ENCODE measurements at regions of chr10 and their contacts with region 1.

Region 1: DNA sequence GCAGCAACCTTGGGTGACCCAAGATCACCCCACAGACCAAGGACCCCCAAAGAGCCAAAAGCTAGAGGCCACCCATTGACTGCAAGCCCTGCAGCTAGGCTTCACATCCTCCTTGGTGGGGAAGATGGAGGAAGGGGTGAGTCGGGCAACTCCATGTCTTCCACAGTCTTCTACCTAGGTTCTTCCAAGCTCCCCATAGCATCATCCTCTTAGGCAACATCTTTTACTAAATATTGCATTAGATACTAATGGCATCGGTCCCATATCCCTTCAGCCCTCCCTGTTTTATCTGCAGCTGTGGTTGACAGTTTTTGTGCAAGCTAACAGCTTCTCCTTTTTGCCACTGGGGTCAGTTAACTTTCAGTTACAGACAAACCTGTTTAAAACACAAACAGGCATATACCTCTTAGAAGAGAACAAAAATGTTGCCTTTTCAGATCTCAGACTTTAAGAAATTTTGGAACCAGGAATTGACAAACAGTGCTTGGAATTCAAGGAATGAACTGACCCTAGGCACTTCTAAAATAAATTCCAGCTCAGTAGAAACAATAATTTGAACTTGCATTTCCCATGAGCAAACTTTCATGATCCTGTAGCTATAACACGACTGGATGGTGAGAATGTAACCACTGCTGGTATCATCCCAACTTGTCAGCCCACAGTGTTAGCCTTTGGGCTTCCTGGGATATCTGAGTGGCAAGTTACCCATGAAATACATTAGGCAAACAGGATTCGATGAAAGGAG is 33.9 kb upstream of the MSMB start:
- DNase-seq: no peak
- H3K4me3 ChIP-seq: no peak overlapping the region
- H3K4me3 Mint-ChIP-seq: peak overlapping the region in 1 of 8 donors; percentile 17
- H3K27ac ChIP-seq: no peak overlapping the region
- H3K27ac Mint-ChIP-seq: peak overlapping the region in 6 of 7 donors; percentile 42 to 83 (median 66)
- H3K4me1 ChIP-seq: peaks cover 18% of the 10 kb centered on the region
- H3K4me1 Mint-ChIP-seq: peaks cover 18 to 57% (median 34%) of the 10 kb centered on the region in 4 donors
- H3K27me3 ChIP-seq: no peaks in the 10 kb centered on the region
- H3K27me3 Mint-ChIP-seq: no peaks in the 10 kb centered on the region

Region 2: DNA sequence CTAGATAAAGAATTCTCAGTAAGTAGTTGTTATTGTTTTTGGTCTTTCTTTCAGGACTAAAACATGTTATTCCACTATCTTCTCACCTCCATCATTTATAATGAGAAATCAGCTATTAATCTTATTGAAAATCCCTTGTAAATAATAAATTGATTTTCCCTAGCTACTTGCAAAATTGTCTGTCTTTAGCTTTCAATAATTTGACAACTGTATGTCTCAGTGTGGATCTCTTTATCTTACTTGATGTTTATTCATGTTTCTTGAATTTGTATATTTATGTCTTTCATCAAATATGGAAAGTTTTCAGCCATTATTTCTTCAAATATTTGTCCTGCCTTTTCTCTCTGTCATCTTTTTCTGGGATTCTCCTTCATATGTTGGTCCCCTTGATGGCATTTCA is 89.7 kb after region 1 on chr10:
- CTCF ChIA-PET with region 1: no interaction called
- POLR2A ChIA-PET with region 1: no interaction called
- intact Hi-C with region 1: loop called (anchors 10 kb)
- DNase-seq: no peak
- H3K4me3 ChIP-seq: no peak overlapping the region
- H3K4me3 Mint-ChIP-seq: no peak overlapping the region
- H3K27ac ChIP-seq: no peak overlapping the region
- H3K27ac Mint-ChIP-seq: no peak overlapping the region
- H3K4me1 ChIP-seq: no peaks in the 10 kb centered on the region
- H3K4me1 Mint-ChIP-seq: no peaks in the 10 kb centered on the region
- H3K27me3 ChIP-seq: no peaks in the 10 kb centered on the region
- H3K27me3 Mint-ChIP-seq: no peaks in the 10 kb centered on the region

Measured in CD4-positive, alpha-beta memory T cell (primary cell).